H1 (cell line): ENCODE measurements at regions of chr11 and their contacts with region 1.

Region 1: GRCh38 chr11:8092587-8093424 is 11.8 kb downstream of the TUB start:
- DNase-seq: peak in 1 of 2 experiments; percentile 71
- H3K4me3 ChIP-seq: no peak overlapping the region
- H3K27ac ChIP-seq: no peak overlapping the region
- H3K4me1 ChIP-seq: peaks cover 0 to 2% (median under 1%) of the 10 kb centered on the region in 4 experiments; a peak in 1 of 7 replicates
- H3K27me3 ChIP-seq: no peaks in the 10 kb centered on the region; a peak in 2 of 7 replicates
- CTCF ChIP-seq: peak; percentile 72 to 86 (median 79)
- EP300 ChIP-seq: no peak
- POLR2A ChIP-seq: no peak
- RAD21 ChIP-seq: peak; percentile 49 to 63

Region 2: GRCh38 chr11:7637447-7638157 is 455.2 kb before region 1 on chr11:
- CTCF ChIA-PET with region 1: no interaction called
- POLR2A ChIA-PET with region 1: no interaction called
- DNase-seq: no peak
- H3K4me3 ChIP-seq: no peak overlapping the region
- H3K27ac ChIP-seq: no peak overlapping the region
- H3K4me1 ChIP-seq: no peaks in the 10 kb centered on the region
- H3K27me3 ChIP-seq: no peaks in the 10 kb centered on the region
- CTCF ChIP-seq: no peak
- EP300 ChIP-seq: no peak
- POLR2A ChIP-seq: no peak
- RAD21 ChIP-seq: no peak

Region 3: GRCh38 chr11:7904914-7905313 is 187.9 kb before region 1 on chr11:
- CTCF ChIA-PET with region 1: interaction called, 12 read pairs
- POLR2A ChIA-PET with region 1: no interaction called
- DNase-seq: no peak
- H3K4me3 ChIP-seq: peak overlapping the region in 2 of 4 experiments; percentile 25 to 30; a peak in 1 of 8 replicates
- H3K27ac ChIP-seq: no peak overlapping the region
- H3K4me1 ChIP-seq: peaks cover 6 to 21% (median 16%) of the 10 kb centered on the region in 4 experiments
- H3K27me3 ChIP-seq: no peaks in the 10 kb centered on the region
- CTCF ChIP-seq: peak in 2 of 3 experiments; percentile 50 to 63; a peak in 3 of 4 replicates
- EP300 ChIP-seq: no peak
- POLR2A ChIP-seq: no peak
- RAD21 ChIP-seq: peak; percentile 69 to 73

Region 4: DNA sequence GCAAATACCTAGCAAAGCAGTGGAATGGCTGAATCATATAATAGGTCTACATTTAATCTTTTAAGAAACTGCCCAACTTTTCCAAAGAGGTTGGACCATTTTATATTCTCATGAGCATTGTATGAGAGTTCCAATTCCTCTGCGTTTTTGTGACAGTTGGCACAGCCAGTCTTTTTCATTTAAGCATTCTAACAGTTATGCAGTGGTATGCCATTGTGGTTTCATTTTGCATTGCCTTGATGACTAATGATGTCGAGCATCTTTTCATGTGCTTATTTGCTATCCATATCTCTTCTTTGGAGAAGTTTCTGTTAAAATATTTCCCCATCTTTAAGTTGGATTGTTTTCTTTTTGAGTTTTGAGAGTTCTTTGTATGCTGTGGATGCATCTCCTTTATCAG is 67.0 kb before region 1 on chr11:
- CTCF ChIA-PET with region 1: interaction called, 1,283 read pairs
- POLR2A ChIA-PET with region 1: no interaction called
- DNase-seq: no peak
- H3K4me3 ChIP-seq: no peak overlapping the region
- H3K27ac ChIP-seq: no peak overlapping the region
- H3K4me1 ChIP-seq: no peaks in the 10 kb centered on the region
- H3K27me3 ChIP-seq: peaks cover 0 to 6% (median 6%) of the 10 kb centered on the region in 4 experiments; a peak in 6 of 7 replicates
- CTCF ChIP-seq: no peak
- EP300 ChIP-seq: no peak
- POLR2A ChIP-seq: no peak
- RAD21 ChIP-seq: no peak

Region 5: GRCh38 chr11:8070417-8071115 is 22.2 kb before region 1 on chr11:
- CTCF ChIA-PET with region 1: interaction called, 106 read pairs
- POLR2A ChIA-PET with region 1: no interaction called
- DNase-seq: no peak
- H3K4me3 ChIP-seq: no peak overlapping the region
- H3K27ac ChIP-seq: no peak overlapping the region
- H3K4me1 ChIP-seq: peaks cover 2 to 18% (median 7%) of the 10 kb centered on the region in 4 experiments
- H3K27me3 ChIP-seq: no peaks in the 10 kb centered on the region; a peak in 2 of 7 replicates
- CTCF ChIP-seq: peak in 1 of 3 experiments; percentile 15; a peak in 1 of 4 replicates
- EP300 ChIP-seq: no peak
- POLR2A ChIP-seq: no peak
- RAD21 ChIP-seq: peak; percentile 19 to 38; a peak in 3 of 4 replicates

Region 6: GRCh38 chr11:8122173-8122764 is 29.5 kb after region 1 on chr11:
- CTCF ChIA-PET with region 1: interaction called, 12 read pairs
- POLR2A ChIA-PET with region 1: no interaction called
- DNase-seq: no peak
- H3K4me3 ChIP-seq: no peak overlapping the region
- H3K27ac ChIP-seq: no peak overlapping the region
- H3K4me1 ChIP-seq: no peaks in the 10 kb centered on the region
- H3K27me3 ChIP-seq: no peaks in the 10 kb centered on the region
- CTCF ChIP-seq: no peak
- EP300 ChIP-seq: no peak
- POLR2A ChIP-seq: no peak
- RAD21 ChIP-seq: no peak